Left cardiac atrium (tissue), 4 donors: ENCODE measurements at regions of chr5 and their contacts with region 1.

Region 1: DNA sequence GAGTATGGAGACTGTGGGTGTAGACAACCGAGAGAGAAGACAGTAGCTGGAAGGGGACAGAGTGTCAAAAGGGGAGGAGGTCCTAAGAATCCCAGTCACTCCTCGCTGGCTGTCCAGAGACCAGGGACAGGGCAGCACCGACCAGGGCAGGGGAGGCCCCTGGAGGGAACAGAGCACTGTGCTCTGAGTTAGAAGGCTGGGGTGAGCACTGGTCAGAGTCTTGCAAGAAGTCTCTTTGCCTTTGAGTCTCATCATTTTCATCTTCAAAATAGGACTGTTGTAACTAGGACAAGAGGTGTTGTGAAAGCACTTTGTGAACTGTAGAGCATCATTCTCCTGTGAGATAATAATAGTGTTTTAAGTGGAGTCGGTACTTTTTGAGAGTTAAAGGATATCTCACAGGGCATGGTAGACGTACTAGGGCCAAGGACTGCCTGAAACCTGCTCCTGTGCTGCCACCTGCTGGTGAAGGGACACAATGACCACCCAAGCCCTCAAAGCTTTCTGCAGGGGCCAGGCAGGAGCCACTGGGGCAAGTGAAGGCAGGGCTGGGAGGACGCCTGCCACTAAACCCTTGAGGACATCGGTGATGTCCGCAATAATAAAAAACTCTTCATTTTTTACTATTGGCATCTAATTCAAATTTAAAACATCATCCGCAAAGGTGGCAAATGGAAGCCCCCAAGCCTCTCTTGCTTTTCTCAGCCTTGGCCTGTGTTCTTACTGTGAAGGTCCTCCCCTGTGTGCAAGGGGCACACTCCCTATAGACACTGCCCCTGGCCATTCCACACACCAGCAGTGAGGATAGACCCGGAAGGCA is 28.2 kb downstream of the SLC6A7 start:
- DNase-seq: peak; percentile 85
- ATAC-seq: peak; percentile 74 to 75

Region 2: GRCh38 chr5:150022163-150022540 is 195.9 kb before region 1 on chr5:
- intact Hi-C with region 1: loop called in 1 of 2 experiments (anchors 10 kb)
- DNase-seq: no peak
- ATAC-seq: peak; percentile 72 to 76

Region 3: DNA sequence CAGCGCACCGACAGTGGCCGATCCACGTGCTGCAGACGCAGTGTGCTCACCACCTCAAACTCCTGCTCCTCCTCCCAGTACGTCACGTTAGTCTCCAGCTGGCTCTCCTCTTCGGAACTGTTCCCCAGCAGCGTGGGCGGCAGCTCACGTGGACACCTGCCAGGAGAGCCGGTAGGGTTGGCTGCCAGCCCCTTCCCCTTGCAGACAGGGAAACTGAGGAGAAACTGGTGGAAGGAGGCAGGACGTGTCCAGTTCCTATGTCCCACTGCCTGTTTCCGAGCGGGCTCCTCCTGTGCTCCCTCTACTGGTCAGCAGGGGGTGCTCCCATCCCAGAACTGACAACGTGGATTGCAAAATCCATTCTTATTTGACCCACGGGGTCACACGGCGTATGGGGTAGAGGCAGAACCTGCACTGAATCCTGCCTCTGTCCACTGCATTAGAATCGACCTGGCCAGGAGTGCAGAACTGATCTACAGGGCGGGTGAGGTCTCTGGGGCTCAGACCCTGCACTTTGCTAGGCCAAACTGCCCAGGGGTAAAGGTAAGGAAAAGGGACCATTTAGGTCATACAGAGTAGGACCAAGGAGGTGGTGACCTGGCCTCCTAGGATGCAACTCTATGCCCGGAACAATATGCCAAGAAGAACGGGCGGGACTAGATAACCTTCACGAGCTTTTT is 88.1 kb before region 1 on chr5:
- intact Hi-C with region 1: loop called (anchors 1 to 2 kb)
- DNase-seq: peak; percentile 79
- ATAC-seq: peak; percentile 80 to 85

Region 4: DNA sequence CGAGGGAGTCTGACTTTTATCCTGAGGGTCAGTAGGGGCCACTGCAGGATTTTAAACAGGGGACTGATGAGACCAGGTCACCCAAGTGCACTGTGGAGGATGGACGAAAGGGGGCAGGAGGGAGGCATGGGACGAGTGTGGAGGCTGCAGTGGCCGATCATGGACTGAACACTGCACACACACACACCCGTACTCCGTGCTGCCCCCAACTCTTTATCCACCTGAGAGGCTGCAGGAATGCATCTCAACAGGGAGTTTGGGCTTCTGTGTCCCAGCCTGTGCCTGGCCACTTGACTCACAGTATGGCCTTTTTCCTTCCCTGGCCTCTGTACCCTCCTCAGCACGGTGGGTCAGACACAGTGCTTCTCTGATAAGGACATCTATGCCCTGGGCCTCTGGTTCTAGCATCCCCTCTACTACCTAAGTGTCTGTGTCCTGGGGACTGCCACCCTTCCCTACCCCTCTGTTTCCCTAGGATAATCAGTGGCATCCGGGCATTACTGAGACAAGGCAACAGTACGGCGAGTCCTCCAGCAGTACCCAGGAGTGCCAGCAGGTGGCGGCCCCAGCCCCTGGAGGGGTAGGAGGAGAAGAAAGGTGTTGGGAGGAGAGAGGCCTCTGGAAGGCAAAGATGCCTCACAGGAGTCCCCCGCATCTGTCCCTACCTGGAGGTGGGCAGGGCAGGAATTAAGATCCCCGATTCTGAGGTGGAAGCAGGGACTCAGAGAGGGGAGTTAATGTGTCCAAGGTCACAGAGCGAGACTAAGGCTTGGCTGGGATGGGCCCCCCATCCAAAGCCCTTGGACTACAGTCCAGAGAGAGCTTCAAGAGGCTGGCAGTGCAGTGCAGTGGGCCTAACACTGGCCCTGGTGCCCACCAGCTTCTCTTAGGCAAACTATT is 56.6 kb before region 1 on chr5:
- intact Hi-C with region 1: loop called (anchors 1 to 5 kb)
- DNase-seq: peak; percentile 82
- ATAC-seq: peak; percentile 35 to 62

Region 5: DNA sequence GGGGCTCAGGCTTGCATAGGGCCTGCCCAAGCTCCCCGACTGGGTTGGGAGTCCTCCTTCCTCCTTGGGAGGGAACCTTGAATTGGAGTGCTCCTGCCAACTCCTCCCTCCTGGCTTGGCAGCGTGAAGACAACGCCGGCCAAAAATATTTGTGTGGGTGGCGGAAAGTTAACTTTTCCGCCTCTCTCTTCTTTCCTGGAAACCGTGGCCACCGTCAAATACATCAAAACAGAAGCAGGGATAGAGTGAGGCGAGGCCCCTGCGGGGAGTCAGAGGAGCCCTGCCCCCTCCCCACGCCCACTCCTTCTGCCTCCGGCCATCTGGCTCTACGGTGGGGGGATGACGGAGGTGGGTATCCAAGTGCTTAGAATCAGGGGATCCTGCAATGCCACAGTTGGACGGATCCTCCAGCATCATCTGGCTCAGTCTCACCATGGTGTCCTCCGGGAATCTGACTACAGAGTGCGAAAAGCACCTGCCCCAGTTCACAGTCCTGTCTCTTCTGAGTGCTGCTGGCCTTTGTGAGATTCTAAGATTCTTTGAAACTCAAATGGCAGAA is 397.1 kb after region 1 on chr5:
- intact Hi-C with region 1: no loop called
- DNase-seq: peak; percentile 86
- ATAC-seq: peak; percentile 32 to 48